ENCODE measurements at regions of chr13 and their contacts with region 1.

Region 1: GRCh38 chr13:28548872-28549271 is 53.9 kb upstream of the FLT1 start:
- DNase-seq: no peak
- H3K4me3 ChIP-seq: no peak overlapping the region
- H3K4me3 Mint-ChIP-seq: no peak overlapping the region
- H3K27ac Mint-ChIP-seq: no peak overlapping the region
- H3K4me1 ChIP-seq: peaks cover 24% of the 10 kb centered on the region
- H3K4me1 Mint-ChIP-seq: peaks cover 62% of the 10 kb centered on the region
- H3K27me3 ChIP-seq: no peaks in the 10 kb centered on the region
- H3K27me3 Mint-ChIP-seq: no peaks in the 10 kb centered on the region
- CTCF ChIP-seq: no peak

Region 2: DNA sequence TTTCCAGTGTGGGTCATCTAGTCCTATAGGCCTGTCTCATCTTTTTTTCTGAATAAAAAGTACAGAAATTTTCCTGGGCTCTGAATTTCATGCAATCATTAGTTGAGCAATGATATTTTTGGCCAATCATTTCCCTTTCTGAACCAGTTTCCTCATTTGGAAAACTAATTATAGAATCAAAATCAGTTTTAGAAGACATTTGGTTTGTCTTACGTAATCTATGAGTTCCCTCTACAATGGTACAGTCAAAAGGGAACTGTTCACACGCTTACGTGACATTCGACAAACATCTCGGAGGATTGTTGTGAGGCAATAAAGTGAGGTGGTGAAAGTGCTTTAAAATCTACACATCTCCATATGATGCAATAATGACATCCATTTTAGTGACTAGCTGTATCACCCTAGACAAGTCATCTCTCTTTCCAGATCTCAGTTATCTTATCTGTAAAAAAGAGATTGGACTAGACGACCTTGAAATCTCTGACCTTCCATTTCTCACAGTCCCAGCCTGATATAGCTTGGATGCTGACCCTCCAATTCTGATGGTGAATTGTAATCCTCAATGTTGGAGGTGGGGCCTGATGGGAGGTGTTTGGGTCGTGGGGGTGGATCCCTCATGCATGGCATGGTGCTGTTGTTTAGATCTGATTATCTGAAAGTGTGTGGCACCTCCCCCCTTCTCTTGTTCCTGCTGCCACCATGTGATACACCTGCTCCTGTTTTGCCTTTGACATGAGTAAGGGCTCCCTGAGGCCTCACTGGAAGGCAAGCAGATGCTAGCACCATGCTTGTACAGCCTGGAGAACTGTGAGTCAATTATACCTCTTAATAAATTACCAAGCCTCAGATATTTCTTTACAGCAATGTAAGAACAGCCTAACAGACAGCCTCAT is 80.6 kb before region 1 on chr13:
- CTCF ChIA-PET with region 1: no interaction called
- POLR2A ChIA-PET with region 1: no interaction called
- intact Hi-C with region 1: no loop called
- DNase-seq: no peak
- H3K4me3 ChIP-seq: no peak overlapping the region
- H3K4me3 Mint-ChIP-seq: no peak overlapping the region
- H3K27ac Mint-ChIP-seq: no peak overlapping the region
- H3K4me1 ChIP-seq: no peaks in the 10 kb centered on the region
- H3K4me1 Mint-ChIP-seq: peaks cover 8% of the 10 kb centered on the region
- H3K27me3 ChIP-seq: no peaks in the 10 kb centered on the region
- H3K27me3 Mint-ChIP-seq: no peaks in the 10 kb centered on the region
- CTCF ChIP-seq: no peak

Region 3: GRCh38 chr13:28530729-28531076 is 18.2 kb before region 1 on chr13:
- CTCF ChIA-PET with region 1: interaction called, 3 read pairs
- POLR2A ChIA-PET with region 1: no interaction called
- intact Hi-C with region 1: loop called (anchors 1 kb)
- DNase-seq: no peak
- H3K4me3 ChIP-seq: peak overlapping the region; percentile 28
- H3K4me3 Mint-ChIP-seq: no peak overlapping the region
- H3K27ac Mint-ChIP-seq: no peak overlapping the region
- H3K4me1 ChIP-seq: no peaks in the 10 kb centered on the region
- H3K4me1 Mint-ChIP-seq: no peaks in the 10 kb centered on the region
- H3K27me3 ChIP-seq: no peaks in the 10 kb centered on the region
- H3K27me3 Mint-ChIP-seq: no peaks in the 10 kb centered on the region
- CTCF ChIP-seq: no peak

Region 4: GRCh38 chr13:28584873-28585381 is 36.1 kb after region 1 on chr13:
- CTCF ChIA-PET with region 1: no interaction called
- POLR2A ChIA-PET with region 1: no interaction called
- intact Hi-C with region 1: loop called (anchors 1 kb)
- DNase-seq: peak in 1 of 2 experiments; percentile 17
- H3K4me3 ChIP-seq: no peak overlapping the region
- H3K4me3 Mint-ChIP-seq: peak overlapping the region; percentile 10
- H3K27ac Mint-ChIP-seq: peak overlapping the region; percentile 75
- H3K4me1 ChIP-seq: peaks cover 20% of the 10 kb centered on the region
- H3K4me1 Mint-ChIP-seq: peaks cover 27% of the 10 kb centered on the region
- H3K27me3 ChIP-seq: no peaks in the 10 kb centered on the region
- H3K27me3 Mint-ChIP-seq: no peaks in the 10 kb centered on the region
- CTCF ChIP-seq: no peak

Region 5: DNA sequence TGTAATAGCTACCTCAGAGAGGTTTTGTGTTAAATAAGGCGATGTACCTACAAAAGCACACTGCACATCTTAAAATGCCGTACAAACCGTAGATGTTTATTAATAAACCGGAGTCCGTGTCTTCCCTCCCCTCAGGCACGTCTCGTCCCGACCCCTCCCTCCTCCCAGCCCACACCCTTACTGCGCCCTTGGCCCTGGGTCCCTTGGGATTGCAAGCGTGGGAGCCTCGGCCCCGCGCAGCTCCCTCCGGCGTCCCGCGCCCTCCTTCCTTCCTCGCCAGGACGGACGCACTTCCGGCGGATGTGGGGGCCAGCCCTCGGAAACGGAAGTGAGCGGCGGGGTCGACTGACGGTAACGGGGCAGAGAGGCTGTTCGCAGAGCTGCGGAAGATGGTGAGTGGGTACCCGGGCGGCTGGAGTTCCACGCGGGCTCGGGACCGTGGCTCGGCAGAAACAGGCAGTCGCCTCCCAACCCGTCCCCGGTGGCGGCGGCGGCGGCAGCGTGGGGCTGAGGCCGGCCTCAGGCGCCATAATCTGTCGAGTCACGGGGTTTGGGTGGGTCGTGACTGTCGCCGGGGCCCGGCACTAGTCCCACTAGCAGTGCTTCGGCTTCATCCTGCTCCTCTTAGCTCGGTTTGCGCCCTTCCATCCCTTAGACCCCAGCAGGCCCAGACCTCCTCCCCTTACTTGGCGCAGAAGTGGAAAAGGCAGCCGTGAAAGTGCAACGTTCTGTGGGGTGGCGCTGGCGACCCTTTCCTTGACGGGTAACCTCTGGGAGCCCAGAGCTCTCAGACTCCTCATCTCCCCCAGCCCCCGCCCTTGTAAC is 110.1 kb after region 1 on chr13 and contains the start of gene POMP:
- CTCF ChIA-PET with region 1: no interaction called
- POLR2A ChIA-PET with region 1: no interaction called
- intact Hi-C with region 1: loop called (anchors 1 kb)
- DNase-seq: peak; percentile 90
- H3K4me3 ChIP-seq: peak within 1 kb of the TSS; percentile 89
- H3K4me3 Mint-ChIP-seq: peak within 1 kb of the TSS; percentile 94
- H3K27ac Mint-ChIP-seq: peak within 1 kb of the TSS; percentile 85
- H3K4me1 ChIP-seq: peaks cover 14% of the 10 kb centered on the region
- H3K4me1 Mint-ChIP-seq: peaks cover 21% of the 10 kb centered on the region
- H3K27me3 ChIP-seq: no peaks in the 10 kb centered on the region
- H3K27me3 Mint-ChIP-seq: no peaks in the 10 kb centered on the region
- CTCF ChIP-seq: no peak
- total RNA-seq, gene POMP: 116 and 125 TPM in 2 replicates

Region 6: DNA sequence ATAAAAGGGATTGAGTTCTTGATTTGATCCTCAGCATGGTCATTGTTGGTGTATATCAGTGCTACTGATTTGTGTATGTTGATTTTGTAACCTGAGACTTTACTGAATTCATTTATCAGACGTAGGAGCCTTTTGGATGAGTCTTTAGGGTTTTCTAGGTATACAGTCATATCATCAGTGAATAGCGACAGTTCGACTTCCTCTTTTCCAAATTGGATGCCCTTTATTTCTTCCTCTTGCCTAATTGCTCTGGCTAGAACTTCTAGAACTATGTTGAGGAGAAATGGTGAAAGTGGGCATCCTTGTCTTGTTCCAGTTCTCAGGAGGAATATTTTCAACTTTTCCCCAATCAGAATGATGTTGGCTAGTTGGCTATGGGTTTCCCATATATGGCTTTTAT is 137.0 kb after region 1 on chr13:
- CTCF ChIA-PET with region 1: no interaction called
- POLR2A ChIA-PET with region 1: no interaction called
- intact Hi-C with region 1: no loop called
- DNase-seq: no peak
- H3K4me3 ChIP-seq: no peak overlapping the region
- H3K4me3 Mint-ChIP-seq: no peak overlapping the region
- H3K27ac Mint-ChIP-seq: no peak overlapping the region
- H3K4me1 ChIP-seq: no peaks in the 10 kb centered on the region
- H3K4me1 Mint-ChIP-seq: no peaks in the 10 kb centered on the region
- H3K27me3 ChIP-seq: no peaks in the 10 kb centered on the region
- H3K27me3 Mint-ChIP-seq: no peaks in the 10 kb centered on the region
- CTCF ChIP-seq: no peak

Measured in Caco-2 (cell line).